ENCODE measurements at regions of chr4 and their contacts with region 1.

Region 1: DNA sequence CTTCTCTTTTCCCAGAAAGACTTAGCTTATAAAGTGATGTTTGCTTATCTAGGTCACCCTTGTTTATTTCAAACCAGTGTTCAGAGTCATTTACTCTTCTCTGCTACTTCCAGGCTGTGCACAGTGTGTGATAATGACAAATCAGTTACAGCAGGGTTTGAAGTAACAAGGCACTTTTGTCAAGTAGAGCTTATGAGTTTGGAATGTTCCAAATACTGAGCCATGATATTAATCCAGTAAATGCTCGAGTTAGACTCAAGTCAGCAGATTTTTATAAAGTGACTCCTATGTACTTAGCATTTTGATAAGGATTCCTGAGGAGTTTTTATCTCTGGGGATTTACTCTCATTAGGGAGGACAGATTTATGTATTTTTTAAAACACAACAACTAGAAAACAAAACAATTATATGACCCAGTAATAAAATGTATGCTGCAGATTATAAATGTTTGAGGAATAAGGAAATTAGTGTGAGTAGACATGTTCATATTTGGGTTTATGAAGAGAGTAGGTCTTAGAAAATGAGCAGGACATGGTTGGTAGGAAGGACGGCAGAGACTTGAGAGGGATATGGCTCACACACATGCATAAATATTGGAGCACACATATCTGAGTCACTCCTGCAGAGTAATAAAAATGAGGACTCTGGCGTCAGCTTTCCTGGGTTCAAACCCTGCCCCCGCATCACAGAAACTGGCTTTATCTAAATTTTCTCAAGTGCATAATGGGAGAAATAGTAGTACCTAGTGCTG is 271.2 kb downstream of the FBXO8 start:
- DNase-seq: no peak
- H3K4me3 ChIP-seq: no peak overlapping the region
- H3K27ac ChIP-seq: peak overlapping the region; percentile 16 to 100; a peak in 3 of 4 replicates
- H3K4me1 ChIP-seq: peaks cover 7 to 42% of the 10 kb centered on the region in 2 experiments; a peak in 3 of 4 replicates
- H3K27me3 ChIP-seq: no peaks in the 10 kb centered on the region
- CTCF ChIP-seq: no peak
- EP300 ChIP-seq: no peak
- RAD21 ChIP-seq: no peak

Region 2: DNA sequence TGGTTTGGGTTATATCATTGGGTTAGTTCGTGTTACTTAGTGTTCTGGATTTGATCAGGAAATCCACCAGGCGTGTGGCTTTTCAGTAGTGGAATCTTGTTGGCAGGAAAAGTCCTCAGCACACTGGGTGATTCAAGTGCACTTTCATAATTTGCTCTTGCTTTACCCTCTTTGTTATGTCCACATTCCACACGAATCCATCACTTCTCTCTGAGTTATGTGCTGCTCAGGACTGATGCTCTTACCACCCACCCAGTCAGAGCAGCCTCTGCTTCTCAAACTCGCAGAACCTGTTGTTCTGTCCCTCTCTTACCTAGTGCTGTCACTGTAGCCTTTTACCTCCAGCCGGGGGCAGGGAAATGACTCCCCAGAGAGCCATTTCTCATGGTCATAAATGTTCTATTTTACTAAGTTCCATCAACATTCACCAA is 576.1 kb before region 1 on chr4:
- CTCF ChIA-PET with region 1: no interaction called
- POLR2A ChIA-PET with region 1: no interaction called
- DNase-seq: no peak
- H3K4me3 ChIP-seq: no peak overlapping the region
- H3K27ac ChIP-seq: peak overlapping the region; percentile 13 to 72; a peak in 3 of 4 replicates
- H3K4me1 ChIP-seq: peaks cover 8 to 12% of the 10 kb centered on the region in 2 experiments; a peak in 3 of 4 replicates
- H3K27me3 ChIP-seq: no peaks in the 10 kb centered on the region
- CTCF ChIP-seq: no peak
- EP300 ChIP-seq: peak; percentile 39 to 57; a peak in 2 of 4 replicates
- RAD21 ChIP-seq: no peak

Region 3: DNA sequence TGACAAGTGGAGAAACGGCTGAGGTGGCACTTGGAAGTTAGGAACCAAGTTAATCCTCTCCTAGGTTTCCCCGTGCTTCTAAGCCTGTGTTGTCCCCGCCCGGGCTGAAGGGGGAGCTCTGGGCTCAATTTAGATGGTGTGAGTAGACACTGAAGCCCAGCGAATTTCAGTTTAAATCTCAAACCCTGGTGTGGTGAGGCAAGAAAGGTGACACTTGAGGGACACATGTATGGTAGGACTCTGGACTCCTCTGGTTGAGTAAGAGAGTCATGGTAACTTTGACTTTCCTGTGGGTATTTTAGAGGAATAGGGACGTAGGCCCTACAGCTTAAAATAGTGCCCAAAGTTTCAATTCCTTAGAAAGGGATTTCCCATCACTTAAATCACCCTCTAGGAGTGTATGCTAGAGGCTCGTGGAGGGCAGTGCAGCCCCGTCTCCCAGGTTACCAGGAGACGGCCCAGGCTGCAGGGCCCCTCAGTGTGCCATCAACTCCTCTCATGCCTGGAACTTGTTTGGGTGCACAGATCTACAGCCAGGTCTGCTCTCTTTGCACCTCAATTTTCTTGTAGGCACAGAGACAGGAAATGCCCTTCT is 506.3 kb before region 1 on chr4:
- CTCF ChIA-PET with region 1: interaction called, 7 read pairs
- POLR2A ChIA-PET with region 1: interaction called, 26 read pairs
- DNase-seq: peak; percentile 77
- H3K4me3 ChIP-seq: peak overlapping the region in 1 of 2 experiments; percentile 66; a peak in 2 of 4 replicates
- H3K27ac ChIP-seq: peak overlapping the region; percentile 82 to 99
- H3K4me1 ChIP-seq: peaks cover 8 to 51% of the 10 kb centered on the region in 2 experiments; a peak in 2 of 4 replicates
- H3K27me3 ChIP-seq: no peaks in the 10 kb centered on the region
- CTCF ChIP-seq: peak; percentile 84
- EP300 ChIP-seq: no peak
- RAD21 ChIP-seq: peak; percentile 83

Region 4: DNA sequence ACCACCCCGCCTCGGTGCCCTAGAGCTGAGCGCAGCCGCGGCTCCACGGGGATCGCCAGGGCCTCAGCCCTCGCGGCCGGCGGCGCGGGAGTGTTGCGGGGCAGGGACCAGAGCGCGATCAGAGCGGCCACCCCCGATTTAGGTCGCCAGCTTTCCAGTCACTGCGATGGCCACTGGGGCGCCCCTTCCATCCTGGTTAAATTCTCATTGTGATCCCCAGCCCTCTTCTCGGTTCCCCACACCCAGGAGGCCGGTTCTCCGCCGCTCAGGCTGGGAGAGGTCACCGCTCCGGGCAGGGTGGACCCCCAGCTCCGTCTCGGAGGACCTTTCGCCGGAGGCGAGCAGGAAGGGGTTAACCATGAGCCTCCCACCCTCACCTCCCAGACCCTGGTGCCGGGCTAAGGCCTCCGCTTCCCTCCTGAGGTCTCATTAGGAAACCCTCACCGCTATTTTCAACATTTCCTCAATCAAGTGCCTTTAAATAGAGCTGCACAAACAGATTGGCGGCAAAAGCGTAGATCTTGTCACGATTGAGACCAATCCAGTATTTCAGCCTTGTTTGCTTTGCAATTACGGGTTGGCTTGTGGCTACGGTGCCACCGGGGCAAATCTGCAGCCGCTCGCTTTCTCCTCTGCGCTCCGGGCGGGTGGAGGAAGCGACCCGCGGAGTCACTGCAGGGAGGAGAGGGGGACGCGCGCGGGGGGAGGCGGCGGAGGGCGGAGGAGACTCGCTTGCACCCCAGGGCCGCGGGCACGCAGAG is 474.0 kb before region 1 on chr4:
- CTCF ChIA-PET with region 1: interaction called, 10 read pairs
- POLR2A ChIA-PET with region 1: interaction called, 27 read pairs
- DNase-seq: peak; percentile 68
- H3K4me3 ChIP-seq: peak overlapping the region; percentile 61 to 62
- H3K27ac ChIP-seq: peak overlapping the region; percentile 91 to 99
- H3K4me1 ChIP-seq: peaks cover 12 to 34% of the 10 kb centered on the region in 2 experiments; a peak in 3 of 4 replicates
- H3K27me3 ChIP-seq: no peaks in the 10 kb centered on the region
- CTCF ChIP-seq: no peak
- EP300 ChIP-seq: no peak
- RAD21 ChIP-seq: no peak

Region 5: DNA sequence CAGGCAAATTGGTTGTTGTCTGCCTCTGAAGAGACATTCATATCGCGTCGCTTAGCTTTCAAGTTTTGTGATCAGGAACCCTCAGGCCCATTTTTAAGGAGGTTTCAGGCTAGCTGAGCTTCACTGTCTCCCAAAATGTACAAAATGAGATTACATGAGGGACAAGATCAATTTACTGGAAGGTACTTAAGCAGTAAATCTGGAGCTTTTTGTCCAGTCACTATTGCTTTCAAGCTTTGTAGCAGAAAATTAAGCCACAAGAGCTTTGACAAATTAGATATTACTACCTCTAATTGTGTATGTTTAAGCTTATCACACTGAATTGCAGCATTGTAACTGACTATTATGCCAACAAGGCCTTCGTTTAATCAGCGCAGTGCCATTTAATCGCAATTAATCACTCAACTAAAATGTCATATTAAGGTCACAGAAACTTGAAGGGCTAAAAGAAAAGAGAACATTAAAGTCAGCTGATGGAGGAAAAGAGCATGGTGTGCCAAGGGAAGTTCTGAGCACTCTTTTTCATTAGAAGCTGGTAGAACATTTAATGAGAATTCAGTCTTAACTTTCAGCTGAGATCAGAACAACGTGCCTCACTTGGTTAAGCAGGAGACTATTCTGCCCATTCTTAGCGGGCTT is 81.9 kb before region 1 on chr4:
- CTCF ChIA-PET with region 1: interaction called, 5 read pairs
- POLR2A ChIA-PET with region 1: interaction called, 23 read pairs
- DNase-seq: peak; percentile 49
- H3K4me3 ChIP-seq: no peak overlapping the region
- H3K27ac ChIP-seq: peak overlapping the region; percentile 28 to 100; a peak in 3 of 4 replicates
- H3K4me1 ChIP-seq: peaks cover 22 to 62% of the 10 kb centered on the region in 2 experiments; a peak in 3 of 4 replicates
- H3K27me3 ChIP-seq: no peaks in the 10 kb centered on the region
- CTCF ChIP-seq: no peak
- EP300 ChIP-seq: peak; percentile 40 to 97
- RAD21 ChIP-seq: peak; percentile 12

Region 6: GRCh38 chr4:174069848-174070330 is 57.6 kb after region 1 on chr4:
- CTCF ChIA-PET with region 1: interaction called, 16 read pairs
- POLR2A ChIA-PET with region 1: interaction called, 81 read pairs
- DNase-seq: peak; percentile 69
- H3K4me3 ChIP-seq: no peak overlapping the region
- H3K27ac ChIP-seq: peak overlapping the region in 1 of 2 experiments; percentile 100; a peak in 2 of 4 replicates
- H3K4me1 ChIP-seq: peaks cover 0 to 26% of the 10 kb centered on the region in 2 experiments; a peak in 2 of 4 replicates
- H3K27me3 ChIP-seq: no peaks in the 10 kb centered on the region
- CTCF ChIP-seq: no peak
- EP300 ChIP-seq: peak; percentile 82 to 100
- RAD21 ChIP-seq: peak; percentile 46

Region 7: DNA sequence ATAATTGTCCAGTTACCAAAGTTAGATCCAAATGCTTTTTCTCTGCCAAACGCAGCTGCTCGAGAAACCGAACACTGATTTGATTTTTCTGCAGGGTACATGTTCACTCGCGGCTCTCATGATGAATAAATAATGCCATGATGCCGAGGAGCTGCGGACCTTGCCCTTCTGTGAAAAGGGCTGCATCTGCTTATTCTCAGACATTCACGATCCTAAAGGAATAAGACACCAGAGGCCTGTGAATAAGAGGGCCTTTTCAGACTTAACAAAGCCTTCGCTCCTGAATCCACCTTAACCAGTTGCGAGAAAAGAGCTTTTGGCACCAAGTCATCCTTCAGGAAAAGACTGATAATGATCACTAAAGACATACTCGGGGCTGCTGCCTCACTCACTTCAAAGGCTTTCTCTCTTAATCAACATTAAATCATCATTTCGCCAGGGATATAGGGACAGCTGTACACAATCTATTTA is 123.7 kb after region 1 on chr4:
- CTCF ChIA-PET with region 1: interaction called, 4 read pairs
- POLR2A ChIA-PET with region 1: interaction called, 17 read pairs
- DNase-seq: peak; percentile 57
- H3K4me3 ChIP-seq: peak overlapping the region; percentile 42 to 55
- H3K27ac ChIP-seq: peak overlapping the region; percentile 56 to 100; a peak in 3 of 4 replicates
- H3K4me1 ChIP-seq: peaks cover 10 to 38% of the 10 kb centered on the region in 2 experiments; a peak in 3 of 4 replicates
- H3K27me3 ChIP-seq: no peaks in the 10 kb centered on the region
- CTCF ChIP-seq: no peak
- EP300 ChIP-seq: peak in 1 of 2 experiments; percentile 92; a peak in 2 of 4 replicates
- RAD21 ChIP-seq: 0 out of 2 replicates have a peak, but pooled peaks have one; percentile 6

Region 8: DNA sequence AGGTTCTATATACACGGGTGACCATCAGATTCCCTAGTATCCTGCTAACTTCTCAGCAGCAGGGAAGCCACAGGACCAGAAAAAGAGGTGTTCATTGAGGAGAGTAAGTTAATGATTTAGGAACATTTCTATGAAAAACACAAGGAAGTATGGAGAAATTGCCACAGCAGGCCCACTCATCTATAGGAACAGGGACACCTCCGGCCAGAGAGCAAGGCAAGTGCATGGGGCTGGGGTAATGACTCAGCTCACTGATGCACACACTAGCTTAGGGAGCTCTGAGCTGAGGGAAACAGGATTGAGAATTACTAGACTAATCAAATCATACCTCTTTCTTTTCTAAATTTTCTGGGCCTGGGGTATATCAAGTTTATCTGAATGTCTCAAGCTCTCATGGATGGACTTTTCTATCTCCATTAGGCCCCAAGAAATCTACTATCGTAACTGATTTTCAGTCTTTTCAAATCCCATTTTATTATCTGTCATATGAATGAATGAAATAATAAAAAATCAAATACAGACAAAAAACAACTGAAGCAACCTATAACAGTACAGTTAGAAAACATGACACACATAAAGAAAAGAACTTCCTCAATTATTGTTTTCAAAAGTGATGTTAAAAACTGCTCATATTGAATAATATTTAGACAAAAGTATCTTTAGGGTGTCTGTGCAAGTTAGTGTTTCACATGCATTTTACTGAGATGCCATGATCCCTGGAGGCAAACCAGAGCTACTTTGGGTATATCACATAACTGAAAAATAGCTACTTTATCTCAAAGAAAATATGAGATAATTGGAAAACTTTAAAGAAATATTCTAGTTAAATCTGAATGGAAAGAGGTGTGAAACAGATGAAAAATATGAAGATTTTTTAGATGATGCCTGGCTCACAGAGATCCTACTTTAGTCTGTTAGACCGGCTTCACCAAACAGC is 181.4 kb after region 1 on chr4:
- CTCF ChIA-PET with region 1: no interaction called
- POLR2A ChIA-PET with region 1: interaction called, 10 read pairs
- DNase-seq: peak; percentile 42
- H3K4me3 ChIP-seq: no peak overlapping the region
- H3K27ac ChIP-seq: peak overlapping the region in 1 of 2 experiments; percentile 100; a peak in 3 of 4 replicates
- H3K4me1 ChIP-seq: peaks cover 0 to 46% of the 10 kb centered on the region in 2 experiments; a peak in 2 of 4 replicates
- H3K27me3 ChIP-seq: no peaks in the 10 kb centered on the region
- CTCF ChIP-seq: no peak
- EP300 ChIP-seq: peak in 1 of 2 experiments; percentile 98; a peak in 3 of 4 replicates
- RAD21 ChIP-seq: peak; percentile 33; the same call in 1 of the 2 replicates

Region 9: GRCh38 chr4:174365018-174365587 is 352.8 kb after region 1 on chr4:
- CTCF ChIA-PET with region 1: no interaction called
- POLR2A ChIA-PET with region 1: no interaction called
- DNase-seq: peak; percentile 23
- H3K4me3 ChIP-seq: no peak overlapping the region
- H3K27ac ChIP-seq: no peak overlapping the region
- H3K4me1 ChIP-seq: no peaks in the 10 kb centered on the region
- H3K27me3 ChIP-seq: no peaks in the 10 kb centered on the region
- CTCF ChIP-seq: peak; percentile 75
- EP300 ChIP-seq: no peak
- RAD21 ChIP-seq: peak; percentile 82

Measured in SK-N-SH (cell line).